ENCODE measurements at regions of chr2 and their contacts with region 1.

Region 1: GRCh38 chr2:230640540-230641011 is 72.1 kb upstream of the CAB39 start:
- DNase-seq: no peak
- CTCF ChIP-seq: no peak

Region 2: DNA sequence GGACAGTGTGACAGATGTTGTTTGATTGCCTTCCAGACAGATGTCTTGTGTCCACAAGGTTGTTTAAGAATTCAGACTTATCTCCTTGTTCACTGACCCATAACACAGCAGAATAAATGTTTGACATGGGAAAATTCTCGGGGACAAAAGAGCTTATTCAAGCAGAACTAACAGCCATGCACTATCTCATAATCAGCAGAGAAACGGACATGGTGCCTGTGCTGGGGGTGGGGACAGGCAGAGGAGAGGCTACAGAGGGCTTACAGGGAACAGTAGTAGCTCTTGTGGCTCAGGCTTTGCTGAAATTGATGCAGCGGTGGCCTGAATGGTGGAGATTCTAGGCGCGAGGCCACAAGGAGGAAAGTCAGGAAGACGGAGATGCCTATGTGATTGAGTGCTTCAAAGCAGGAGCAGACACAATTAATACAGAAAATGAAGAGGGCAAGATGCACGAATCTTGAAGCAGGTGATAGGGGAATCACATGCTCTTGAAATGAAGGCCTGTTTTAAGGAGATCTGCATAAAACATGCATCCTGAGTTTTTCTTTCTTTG is 10.1 kb after region 1 on chr2:
- CTCF ChIA-PET with region 1: interaction called, 15 read pairs
- POLR2A ChIA-PET with region 1: interaction called, 3 read pairs
- DNase-seq: no peak
- CTCF ChIP-seq: no peak

Region 3: DNA sequence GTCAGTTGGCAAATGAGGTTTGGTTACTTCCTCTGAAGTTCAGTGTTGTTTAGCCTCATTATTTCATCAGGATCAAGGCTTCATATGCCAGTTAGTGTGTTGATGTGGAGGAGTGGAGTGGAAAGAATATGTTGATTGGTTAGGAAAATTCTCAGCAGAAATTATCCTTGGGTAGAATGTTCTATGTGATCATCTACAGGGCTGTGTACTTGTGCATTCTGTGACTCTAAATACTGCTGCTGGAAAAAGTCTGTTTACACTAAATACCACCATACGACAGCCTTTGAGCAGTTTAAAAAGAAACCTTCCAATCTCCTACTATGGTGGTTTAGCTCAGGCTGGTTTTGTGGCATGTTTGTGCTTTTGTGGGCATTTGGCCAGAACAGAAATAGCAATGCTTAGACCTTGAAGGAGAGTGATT is 97.8 kb after region 1 on chr2:
- CTCF ChIA-PET with region 1: no interaction called
- POLR2A ChIA-PET with region 1: no interaction called
- DNase-seq: no peak
- CTCF ChIP-seq: no peak

Region 4: DNA sequence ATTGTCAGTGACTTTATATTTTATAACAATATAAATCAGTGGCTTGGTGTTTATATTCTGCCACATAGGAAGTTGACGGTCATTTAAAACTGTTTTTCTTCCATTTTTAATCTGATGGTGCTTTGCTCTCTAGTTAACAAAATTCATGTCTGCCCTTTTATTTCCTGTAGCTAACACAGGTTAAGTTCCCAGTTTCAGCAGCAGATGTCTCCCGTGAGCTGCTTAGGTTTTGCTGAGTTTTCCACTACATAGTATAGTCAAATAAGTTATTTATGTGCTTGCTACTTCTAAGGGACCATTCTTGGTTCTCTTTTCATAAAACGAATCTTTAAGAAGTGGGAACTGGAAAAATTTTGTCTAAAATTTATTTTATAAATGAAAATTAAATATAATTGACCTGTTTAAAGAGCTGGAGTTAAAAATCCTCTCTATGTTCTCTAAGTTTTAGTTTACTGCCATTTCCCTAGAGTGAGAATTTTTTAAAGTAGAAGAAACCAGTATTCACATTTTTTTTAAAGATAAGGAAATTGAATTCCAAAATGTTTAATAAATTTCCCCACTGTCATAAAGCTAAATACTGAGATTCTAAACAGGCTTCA is 463.6 kb after region 1 on chr2:
- CTCF ChIA-PET with region 1: no interaction called
- POLR2A ChIA-PET with region 1: no interaction called
- DNase-seq: peak; percentile 56
- CTCF ChIP-seq: peak; percentile 88